AG04450 (cell line): ENCODE measurements at regions of chr18 and their contacts with region 1.

Region 1: DNA sequence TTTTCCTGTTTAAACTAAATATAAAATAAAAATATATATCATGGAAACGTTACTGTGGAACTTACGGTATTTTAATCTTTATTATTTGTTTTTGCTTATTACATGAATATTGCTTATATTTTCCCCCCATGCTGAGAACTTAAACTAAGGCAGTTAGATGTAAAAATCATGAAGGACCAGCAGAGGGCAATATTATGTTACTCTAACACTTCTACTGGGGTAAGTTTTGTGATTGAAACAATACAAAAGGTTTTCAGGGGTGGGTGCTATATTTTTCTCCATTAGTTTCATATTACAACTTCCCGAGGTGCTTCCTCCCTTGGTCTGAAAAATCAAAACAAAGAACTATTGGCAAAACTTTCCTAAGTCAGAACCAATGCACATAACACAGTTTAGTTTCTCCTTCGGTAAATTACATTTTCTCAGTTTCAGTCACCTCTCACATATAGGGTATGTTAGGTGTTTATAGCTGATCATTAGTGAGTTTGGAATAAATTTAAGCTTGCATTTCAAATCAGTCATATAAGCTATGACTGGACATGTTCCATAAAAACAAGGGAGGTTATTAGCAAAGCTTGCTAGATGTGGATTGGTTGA is 54.8 kb downstream of the ZNF407 start:
- DNase-seq: peak; percentile 32
- H3K4me3 ChIP-seq: no peak overlapping the region
- H3K27ac ChIP-seq: no peak overlapping the region
- H3K27me3 ChIP-seq: no peaks in the 10 kb centered on the region
- CTCF ChIP-seq: peak; percentile 63

Region 2: DNA sequence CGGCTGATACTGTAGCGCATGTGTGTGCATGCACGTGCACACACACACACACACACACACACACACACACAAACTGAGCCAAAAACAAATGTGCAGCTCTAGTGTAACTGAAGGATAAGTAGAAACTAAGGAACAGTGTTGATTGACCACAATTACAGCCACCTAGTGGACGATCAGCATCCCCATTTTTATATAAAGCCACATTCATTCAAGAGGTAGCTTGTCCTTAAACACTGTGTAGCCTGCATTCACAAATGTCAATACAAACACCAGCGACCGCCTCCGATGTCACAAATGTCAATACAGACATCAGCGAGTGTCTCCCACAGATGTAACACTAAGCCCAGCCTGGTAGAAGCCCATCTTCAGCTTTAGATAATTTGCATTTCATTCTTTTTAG is 389.1 kb after region 1 on chr18:
- CTCF ChIA-PET with region 1: interaction called, 23 read pairs
- POLR2A ChIA-PET with region 1: no interaction called
- DNase-seq: no peak
- H3K4me3 ChIP-seq: no peak overlapping the region
- H3K27ac ChIP-seq: no peak overlapping the region
- H3K27me3 ChIP-seq: no peaks in the 10 kb centered on the region
- CTCF ChIP-seq: peak; percentile 61

Region 3: GRCh38 chr18:75167759-75168618 is 515.5 kb after region 1 on chr18:
- CTCF ChIA-PET with region 1: interaction called, 12 read pairs
- POLR2A ChIA-PET with region 1: no interaction called
- DNase-seq: no peak
- H3K4me3 ChIP-seq: peak overlapping the region; percentile 48
- H3K27ac ChIP-seq: no peak overlapping the region
- H3K27me3 ChIP-seq: peaks cover 16% of the 10 kb centered on the region
- CTCF ChIP-seq: no peak